Cardiac septum (tissue), 1 donor: ENCODE measurements at regions of chr4 and their contacts with region 1.

Region 1: DNA sequence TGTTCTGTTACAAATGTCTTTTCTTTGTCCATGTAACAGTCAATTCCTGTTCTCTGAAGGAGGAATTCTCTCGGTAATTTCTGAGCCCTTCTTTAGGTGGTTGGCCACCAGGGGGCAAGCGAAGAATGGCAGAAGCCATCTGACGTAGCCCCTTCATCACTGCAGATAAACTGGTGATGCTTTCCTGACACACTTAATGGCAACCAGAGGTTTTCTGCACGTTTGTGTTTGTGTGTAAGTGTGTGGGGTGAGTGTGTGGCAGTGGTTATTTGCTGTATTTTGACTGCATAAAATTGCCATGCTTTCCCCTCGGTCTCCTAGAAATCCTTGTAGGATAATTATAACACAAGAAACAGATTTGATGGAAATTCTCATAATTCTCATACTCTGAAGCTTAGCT is 64.8 kb upstream of the STOX2 start:
- DNase-seq: no peak

Region 2: GRCh38 chr4:183563874-183564273 is 276.4 kb before region 1 on chr4:
- intact Hi-C with region 1: no loop called
- DNase-seq: no peak

Region 3: GRCh38 chr4:183729430-183730328 is 110.6 kb before region 1 on chr4:
- intact Hi-C with region 1: no loop called
- DNase-seq: no peak

Region 4: DNA sequence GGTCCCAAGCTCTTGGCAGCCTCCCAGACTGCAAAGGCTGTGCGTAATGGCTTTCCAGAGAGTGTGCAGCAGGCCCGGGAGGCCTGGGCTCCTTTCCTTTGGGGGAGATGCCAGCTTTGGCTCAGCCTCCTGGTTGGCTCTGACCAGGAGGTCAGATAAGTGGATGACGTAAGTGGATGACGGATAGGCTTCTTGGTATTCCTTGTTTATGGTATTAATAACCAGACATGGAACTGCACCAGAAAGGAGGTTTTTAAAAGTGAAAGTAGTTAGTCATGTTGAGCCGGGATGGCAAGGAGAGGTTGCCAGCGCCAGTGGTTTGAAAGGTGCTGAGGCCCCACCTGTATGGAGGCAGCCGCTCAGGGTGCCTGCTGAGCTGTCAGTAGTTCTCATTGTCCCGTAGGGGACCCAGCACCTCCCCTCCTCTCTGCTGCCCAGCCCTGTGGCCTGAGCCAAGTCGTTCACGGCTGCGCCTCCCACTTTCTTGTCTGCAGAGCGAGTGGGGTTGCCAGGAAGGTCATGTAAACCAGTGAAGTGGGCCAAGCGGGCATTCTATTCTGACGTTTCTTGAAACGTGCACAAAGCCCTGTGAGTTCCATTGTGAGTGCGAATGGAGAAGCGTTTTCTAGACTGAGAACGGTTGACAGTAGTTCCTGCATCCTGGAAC is 36.1 kb after region 1 on chr4:
- intact Hi-C with region 1: loop called (anchors 1 kb)
- DNase-seq: peak; percentile 88

Region 5: GRCh38 chr4:183905081-183905592 is 64.8 kb after region 1 on chr4 and contains the start of gene STOX2:
- intact Hi-C with region 1: loop called (anchors 2 kb)
- DNase-seq: peak; percentile 92
- total RNA-seq, gene STOX2: 9.4 TPM

Region 6: DNA sequence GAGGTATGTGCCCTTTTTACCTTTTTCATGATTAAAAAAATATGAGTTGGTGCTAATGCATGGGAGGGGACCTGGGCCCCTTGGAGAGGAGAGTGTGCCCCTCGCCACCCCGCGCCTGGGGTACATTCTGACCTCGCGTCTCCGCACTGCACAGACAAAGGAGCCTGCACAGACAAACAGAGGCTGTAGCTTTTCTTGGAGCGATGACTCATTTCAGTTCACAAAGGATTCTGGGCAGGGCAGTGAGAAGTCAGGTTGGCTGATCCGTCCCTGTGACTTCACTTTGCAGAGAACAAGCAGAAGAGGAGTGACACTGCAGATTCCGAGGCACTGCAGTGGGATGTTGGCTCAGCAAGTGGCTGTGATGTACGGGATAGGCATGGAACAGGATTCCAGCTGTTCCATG is 147.7 kb after region 1 on chr4:
- intact Hi-C with region 1: loop called (anchors 5 kb)
- DNase-seq: peak; percentile 90

Region 7: GRCh38 chr4:184100297-184100885 is 260.1 kb after region 1 on chr4:
- intact Hi-C with region 1: loop called (anchors 1 kb)
- DNase-seq: no peak

Region 8: GRCh38 chr4:184168406-184169019 is 328.2 kb after region 1 on chr4:
- intact Hi-C with region 1: loop called (anchors 1 kb)
- DNase-seq: peak; percentile 87

Region 9: DNA sequence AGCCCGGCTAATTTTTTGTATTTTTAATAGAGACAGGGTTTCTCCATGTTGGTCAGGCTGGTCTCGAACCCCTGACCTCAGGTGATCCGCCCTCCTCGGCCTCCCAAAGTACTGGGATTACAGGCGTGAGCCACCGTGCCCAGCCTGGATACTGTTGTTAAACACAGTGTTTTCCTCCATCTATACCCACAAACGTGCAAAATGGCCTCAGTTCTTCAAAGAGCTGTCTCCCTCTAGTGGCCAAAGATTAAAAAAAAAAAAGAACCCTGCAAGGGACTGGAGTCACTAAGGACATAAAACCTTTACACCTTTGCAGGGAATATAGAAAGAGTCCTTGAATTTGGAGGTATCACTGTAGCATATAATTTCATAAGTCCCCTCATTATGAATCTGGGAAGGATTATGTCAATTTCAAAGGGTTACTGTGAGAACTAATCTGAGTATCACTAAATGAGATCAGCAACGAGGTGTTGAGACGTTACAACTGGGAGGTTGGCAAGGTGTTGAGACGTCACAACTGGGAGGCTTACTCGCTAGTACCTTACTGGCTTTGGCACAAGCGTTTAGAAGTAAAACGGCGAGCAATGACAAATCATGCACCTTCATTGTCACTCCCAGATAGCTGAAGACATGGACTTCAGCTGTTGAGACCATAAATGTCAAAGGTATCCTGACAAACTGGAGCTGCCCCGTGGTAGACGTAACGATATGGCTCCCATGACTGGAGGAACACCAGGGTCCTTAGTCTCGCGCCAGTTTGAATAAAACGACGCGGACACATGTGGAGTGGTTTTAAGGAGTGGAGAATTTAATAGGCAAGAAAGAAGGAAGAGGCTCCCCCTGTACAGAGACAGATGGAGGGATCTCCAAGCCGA is 410.7 kb after region 1 on chr4:
- intact Hi-C with region 1: loop called (anchors 5 kb)
- DNase-seq: no peak